Common myeloid progenitor, CD34-positive (primary cell): ENCODE measurements at regions of chr13 and their contacts with region 1.

Region 1: GRCh38 chr13:75581874-75582640 is 32.5 kb downstream of the UCHL3 start:
- DNase-seq: no peak
- H3K4me3 ChIP-seq: no peak overlapping the region
- H3K27ac ChIP-seq: no peak overlapping the region
- H3K4me1 ChIP-seq: no peaks in the 10 kb centered on the region
- H3K27me3 ChIP-seq: no peaks in the 10 kb centered on the region

Region 2: DNA sequence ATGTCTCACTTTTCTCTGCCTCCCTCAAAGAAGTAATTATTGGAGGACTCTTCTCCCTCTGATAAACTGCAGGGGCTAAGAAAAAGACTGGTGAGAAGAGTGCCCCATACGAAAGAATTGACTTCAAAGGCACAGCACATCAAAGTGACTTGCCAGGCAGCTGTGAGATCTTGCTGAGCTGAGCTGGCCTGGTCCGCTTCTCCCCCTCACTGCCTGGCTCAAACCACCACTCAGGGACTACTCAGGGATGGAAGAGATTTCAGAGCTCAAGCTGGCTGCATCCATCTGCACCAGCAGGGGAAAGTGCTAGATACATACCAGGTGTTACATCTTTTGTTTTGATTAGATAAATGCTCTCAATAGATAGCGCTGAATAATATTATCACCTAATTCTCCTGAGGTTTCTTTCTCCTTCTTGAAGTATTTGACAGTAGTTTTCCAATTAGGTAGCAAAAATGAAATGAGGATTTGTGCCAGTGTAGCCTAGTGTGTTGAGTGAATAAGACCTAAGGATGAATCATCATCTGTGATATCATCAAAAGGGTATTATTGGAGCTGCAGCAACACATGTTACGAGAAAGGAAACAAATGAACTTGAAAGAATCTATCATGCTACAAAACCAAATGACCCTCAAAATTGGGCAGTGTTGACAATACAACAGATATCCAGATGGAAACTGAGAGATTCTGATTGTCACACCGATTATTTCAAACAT is 479.9 kb before region 1 on chr13:
- CTCF ChIA-PET with region 1: no interaction called
- POLR2A ChIA-PET with region 1: interaction called, 10 read pairs
- DNase-seq: no peak
- H3K4me3 ChIP-seq: no peak overlapping the region
- H3K27ac ChIP-seq: no peak overlapping the region
- H3K4me1 ChIP-seq: no peaks in the 10 kb centered on the region
- H3K27me3 ChIP-seq: no peaks in the 10 kb centered on the region

Region 3: DNA sequence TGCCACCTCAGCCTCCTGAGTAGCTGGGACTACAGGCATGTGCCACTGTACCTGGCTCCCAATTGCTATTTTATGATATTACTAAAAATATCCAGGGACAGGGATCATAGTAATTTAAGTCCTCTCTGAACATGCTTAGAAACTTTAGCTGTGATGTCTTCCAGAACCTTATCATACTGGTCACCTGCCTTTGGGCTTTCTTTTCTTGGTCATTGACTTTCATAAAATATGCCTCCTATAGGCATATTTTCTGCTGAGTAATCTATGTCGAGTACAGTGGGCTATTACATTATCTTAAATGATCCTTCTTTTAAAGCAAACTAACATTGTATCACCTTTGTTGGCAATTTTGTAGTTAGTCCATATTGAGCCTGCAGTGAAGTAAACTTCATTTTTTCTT is 26.2 kb before region 1 on chr13:
- CTCF ChIA-PET with region 1: no interaction called
- POLR2A ChIA-PET with region 1: no interaction called
- DNase-seq: no peak
- H3K4me3 ChIP-seq: no peak overlapping the region
- H3K27ac ChIP-seq: no peak overlapping the region
- H3K4me1 ChIP-seq: peaks cover 0 to 6% (median 2%) of the 10 kb centered on the region in 4 experiments
- H3K27me3 ChIP-seq: no peaks in the 10 kb centered on the region